CD4-positive, alpha-beta memory T cell (primary cell): ENCODE measurements at regions of chr6 and their contacts with region 1.

Region 1: DNA sequence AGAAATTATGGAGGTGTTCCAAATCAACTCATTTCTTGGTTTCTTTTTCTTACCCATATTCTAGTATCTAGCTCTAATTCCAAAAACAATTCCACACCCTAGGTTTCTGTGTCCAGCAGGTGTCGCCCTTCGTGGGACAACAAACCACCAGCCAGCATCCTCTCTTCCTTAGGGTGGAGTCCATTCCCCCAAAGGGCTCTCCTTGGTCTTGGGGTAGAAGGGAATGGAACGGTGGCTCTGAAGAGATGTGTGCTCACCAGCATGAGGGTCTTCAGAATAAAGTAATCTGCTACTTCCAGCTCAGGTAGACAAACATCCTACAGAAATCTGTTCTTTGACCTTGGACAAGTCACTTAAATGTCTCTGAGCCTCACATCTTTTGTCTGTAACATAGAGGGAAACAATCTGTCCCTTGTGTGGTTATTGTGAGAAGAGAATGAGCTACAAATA is 7.2 kb downstream of the HLA-DMB start:
- DNase-seq: peak; percentile 67 to 73 (median 70)
- H3K4me3 ChIP-seq: no peak overlapping the region
- H3K4me3 Mint-ChIP-seq: no peak overlapping the region
- H3K27ac ChIP-seq: no peak overlapping the region
- H3K27ac Mint-ChIP-seq: peak overlapping the region in 2 of 7 donors; percentile 4 to 26
- H3K4me1 ChIP-seq: peaks cover 5% of the 10 kb centered on the region
- H3K4me1 Mint-ChIP-seq: peaks cover 0 to 7% (median 5%) of the 10 kb centered on the region in 4 donors
- H3K27me3 ChIP-seq: no peaks in the 10 kb centered on the region
- H3K27me3 Mint-ChIP-seq: no peaks in the 10 kb centered on the region

Region 2: DNA sequence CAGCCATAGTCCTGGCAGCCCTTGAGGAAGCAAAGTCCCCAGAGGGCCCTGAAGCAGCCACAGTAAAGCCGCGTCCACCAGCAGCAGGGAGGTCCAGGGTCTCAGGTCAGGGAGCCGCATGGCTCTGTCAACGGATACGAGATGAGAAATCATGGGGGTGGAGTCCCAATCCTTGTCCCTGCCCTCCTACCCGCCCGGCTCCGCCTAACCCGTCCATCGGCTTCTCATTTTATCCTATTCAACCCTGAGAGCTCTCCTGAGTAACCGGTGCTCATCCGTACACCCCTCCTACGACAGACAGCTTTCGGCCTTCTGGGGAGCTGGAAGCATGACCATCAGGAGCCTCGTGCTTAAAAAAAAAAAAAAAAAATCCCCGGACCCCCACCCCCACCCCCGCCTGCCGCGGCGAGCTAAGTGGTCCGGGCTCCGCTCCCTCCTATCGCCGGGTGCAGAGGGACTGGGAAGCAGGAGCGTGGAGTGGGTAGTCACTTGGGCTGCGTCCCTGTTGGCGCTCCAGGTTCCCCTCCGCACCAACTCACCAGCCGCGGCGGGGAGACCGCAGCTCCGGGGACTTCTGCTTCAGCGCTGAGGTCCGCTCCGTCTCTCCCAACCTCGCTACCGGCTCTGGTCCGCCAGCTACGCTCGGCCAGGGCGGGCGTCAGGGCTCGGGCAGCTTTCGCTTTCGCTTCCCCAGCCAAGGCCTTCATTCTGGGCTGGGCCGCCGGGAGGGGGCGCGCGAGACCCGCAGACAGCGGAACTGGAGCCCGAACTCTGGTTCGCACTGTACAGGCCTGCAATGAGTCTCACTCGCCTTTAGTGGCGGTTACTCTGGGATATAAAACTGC is 95.3 kb before region 1 on chr6 and contains the start of gene TAP2:
- CTCF ChIA-PET with region 1: interaction called, 16 read pairs
- POLR2A ChIA-PET with region 1: interaction called, 4 read pairs
- intact Hi-C with region 1: no loop called
- DNase-seq: peak; percentile 95 to 99 (median 96)
- H3K4me3 ChIP-seq: peak within 1 kb of the TSS; percentile 58 to 74
- H3K4me3 Mint-ChIP-seq: peak within 1 kb of the TSS; percentile 91 to 97 (median 93)
- H3K27ac ChIP-seq: peak within 1 kb of the TSS; percentile 99
- H3K27ac Mint-ChIP-seq: peak within 1 kb of the TSS; percentile 93 to 100 (median 99)
- H3K4me1 ChIP-seq: peaks cover 83% of the 10 kb centered on the region
- H3K4me1 Mint-ChIP-seq: peaks cover 66 to 99% (median 78%) of the 10 kb centered on the region in 4 donors
- H3K27me3 ChIP-seq: no peaks in the 10 kb centered on the region
- H3K27me3 Mint-ChIP-seq: no peaks in the 10 kb centered on the region
- total RNA-seq, gene TAP2: 106 to 112 TPM

Region 3: DNA sequence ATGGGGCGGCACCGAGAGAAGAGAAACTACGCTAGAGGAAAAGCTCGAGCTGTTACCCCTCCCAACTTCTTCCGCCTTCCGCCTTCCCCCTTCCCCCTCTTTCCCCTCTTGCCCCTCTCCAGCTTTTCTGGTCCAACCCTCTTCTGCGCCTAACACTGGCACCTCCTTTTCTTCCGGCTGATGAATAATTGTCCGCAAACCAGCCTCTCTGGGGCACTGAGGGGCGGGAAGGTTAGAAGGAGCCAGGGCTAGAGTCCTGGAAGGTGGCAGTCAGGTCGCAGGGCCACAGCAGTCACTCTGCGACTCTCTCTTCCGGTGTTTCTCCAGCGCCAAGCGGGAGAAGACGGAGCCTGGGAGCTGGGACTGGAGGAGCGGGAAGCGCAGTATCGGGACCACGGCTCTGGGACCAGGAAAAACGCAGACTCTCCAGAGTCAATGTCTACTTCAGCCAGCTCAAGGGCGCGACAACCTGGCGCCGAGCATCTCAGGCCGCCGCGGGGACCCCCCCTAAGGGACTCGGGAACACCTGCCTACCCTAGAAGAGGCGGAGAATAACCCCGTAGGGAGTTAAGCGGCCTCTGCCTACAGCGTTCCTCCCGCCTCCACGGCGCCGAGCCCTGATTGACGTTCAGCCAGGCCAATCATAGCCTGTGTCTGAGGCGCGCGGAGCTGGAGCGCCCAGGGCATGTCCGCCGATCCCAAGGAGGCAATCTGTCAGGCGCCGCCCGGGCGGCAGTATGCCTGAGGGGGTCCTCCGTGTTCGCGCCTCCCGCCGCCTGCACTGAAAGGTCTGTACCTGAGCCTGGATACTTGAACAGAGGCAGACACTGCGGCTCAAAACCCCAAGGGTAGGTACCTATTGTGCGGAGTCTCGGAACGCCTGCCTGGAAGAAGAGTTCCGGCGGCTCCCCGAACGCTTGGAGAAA is 39.3 kb before region 1 on chr6:
- CTCF ChIA-PET with region 1: interaction called, 17 read pairs
- POLR2A ChIA-PET with region 1: interaction called, 3 read pairs
- intact Hi-C with region 1: no loop called
- DNase-seq: peak; percentile 91 to 97 (median 91)
- H3K4me3 ChIP-seq: peak overlapping the region; percentile 78 to 90
- H3K4me3 Mint-ChIP-seq: peak overlapping the region; percentile 99 to 100 (median 100)
- H3K27ac ChIP-seq: peak overlapping the region; percentile 84
- H3K27ac Mint-ChIP-seq: peak overlapping the region; percentile 93 to 99 (median 98)
- H3K4me1 ChIP-seq: peaks cover 21% of the 10 kb centered on the region
- H3K4me1 Mint-ChIP-seq: peaks cover 14 to 45% (median 26%) of the 10 kb centered on the region in 4 donors
- H3K27me3 ChIP-seq: no peaks in the 10 kb centered on the region
- H3K27me3 Mint-ChIP-seq: no peaks in the 10 kb centered on the region

Region 4: DNA sequence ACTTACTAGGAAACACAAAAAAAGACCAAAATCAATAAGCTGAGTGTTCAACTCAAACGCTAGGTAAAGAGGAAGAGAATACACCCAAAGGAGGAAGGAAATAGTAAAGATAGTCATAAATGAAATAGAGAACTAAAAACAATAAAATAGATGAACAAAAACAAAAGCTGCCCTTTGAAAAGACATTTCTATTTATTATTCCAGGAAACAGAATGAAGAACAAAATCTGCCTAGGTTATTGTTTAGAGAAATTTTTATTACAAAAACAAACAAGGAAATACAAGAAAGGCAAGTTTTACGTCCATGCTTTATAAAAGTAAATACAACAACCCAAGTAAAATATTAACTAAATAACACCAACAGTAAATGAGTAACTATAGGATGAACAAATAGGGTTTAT is 12.9 kb before region 1 on chr6:
- CTCF ChIA-PET with region 1: interaction called, 12 read pairs
- POLR2A ChIA-PET with region 1: interaction called, 3 read pairs
- intact Hi-C with region 1: no loop called
- DNase-seq: no peak
- H3K4me3 ChIP-seq: no peak overlapping the region
- H3K4me3 Mint-ChIP-seq: no peak overlapping the region
- H3K27ac ChIP-seq: no peak overlapping the region
- H3K27ac Mint-ChIP-seq: no peak overlapping the region
- H3K4me1 ChIP-seq: no peaks in the 10 kb centered on the region
- H3K4me1 Mint-ChIP-seq: peaks cover 0 to 5% (median under 1%) of the 10 kb centered on the region in 4 donors
- H3K27me3 ChIP-seq: no peaks in the 10 kb centered on the region
- H3K27me3 Mint-ChIP-seq: peaks cover 2 to 6% of the 10 kb centered on the region in 2 donors

Region 5: GRCh38 chr6:32952817-32953739 is 19.4 kb after region 1 on chr6 and contains the start of gene HLA-DMA:
- CTCF ChIA-PET with region 1: interaction called, 567 read pairs
- POLR2A ChIA-PET with region 1: interaction called, 27 read pairs
- intact Hi-C with region 1: loop called (anchors 1 kb)
- DNase-seq: peak; percentile 76 to 90 (median 85)
- H3K4me3 ChIP-seq: peak within 1 kb of the TSS; percentile 7 to 19
- H3K4me3 Mint-ChIP-seq: peak within 1 kb of the TSS; percentile 18 to 80 (median 68)
- H3K27ac ChIP-seq: peak within 1 kb of the TSS; percentile 31
- H3K27ac Mint-ChIP-seq: peak within 1 kb of the TSS; percentile 49 to 89 (median 82)
- H3K4me1 ChIP-seq: peaks cover 27% of the 10 kb centered on the region
- H3K4me1 Mint-ChIP-seq: peaks cover 24 to 44% (median 34%) of the 10 kb centered on the region in 4 donors
- H3K27me3 ChIP-seq: no peaks in the 10 kb centered on the region
- H3K27me3 Mint-ChIP-seq: no peaks in the 10 kb centered on the region
- total RNA-seq, gene HLA-DMA: 8.5 to 10.2 TPM